CD8-positive, alpha-beta T cell (primary cell): ENCODE measurements at regions of chr3 and their contacts with region 1.

Region 1: GRCh38 chr3:159045268-159045910 is 243.5 kb downstream of the MFSD1 start:
- DNase-seq: no peak
- ATAC-seq: no peak
- H3K4me3 ChIP-seq: no peak overlapping the region
- H3K4me3 Mint-ChIP-seq: no peak overlapping the region
- H3K27ac ChIP-seq: no peak overlapping the region
- H3K27ac Mint-ChIP-seq: no peak overlapping the region
- H3K4me1 ChIP-seq: no peaks in the 10 kb centered on the region
- H3K4me1 Mint-ChIP-seq: no peaks in the 10 kb centered on the region
- H3K27me3 ChIP-seq: no peaks in the 10 kb centered on the region
- H3K27me3 Mint-ChIP-seq: no peaks in the 10 kb centered on the region
- CTCF ChIP-seq: no peak

Region 2: DNA sequence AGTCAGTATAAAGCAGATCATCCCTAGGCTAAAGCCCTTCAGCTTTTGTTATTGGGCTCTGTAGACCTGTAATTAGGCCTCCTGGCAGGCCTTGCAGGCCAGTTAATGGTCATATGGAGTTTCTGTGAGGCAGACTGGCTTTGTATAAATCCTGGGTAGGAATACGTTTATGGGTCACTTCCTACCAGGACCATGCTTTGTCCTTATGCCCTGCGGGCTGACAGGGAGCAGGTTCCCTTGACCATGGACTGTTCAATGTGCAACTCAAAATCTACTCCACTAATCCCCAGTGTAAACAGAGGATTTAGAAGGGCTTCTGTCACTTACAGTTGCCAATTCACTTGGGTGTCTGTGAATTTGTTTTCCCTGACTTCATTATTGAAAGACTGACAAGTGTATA is 677.1 kb before region 1 on chr3:
- CTCF ChIA-PET with region 1: no interaction called
- POLR2A ChIA-PET with region 1: no interaction called
- intact Hi-C with region 1: no loop called
- DNase-seq: no peak
- ATAC-seq: no peak
- H3K4me3 ChIP-seq: no peak overlapping the region
- H3K4me3 Mint-ChIP-seq: no peak overlapping the region
- H3K27ac ChIP-seq: no peak overlapping the region
- H3K27ac Mint-ChIP-seq: no peak overlapping the region
- H3K4me1 ChIP-seq: no peaks in the 10 kb centered on the region
- H3K4me1 Mint-ChIP-seq: no peaks in the 10 kb centered on the region
- H3K27me3 ChIP-seq: no peaks in the 10 kb centered on the region
- H3K27me3 Mint-ChIP-seq: no peaks in the 10 kb centered on the region
- CTCF ChIP-seq: no peak

Region 3: GRCh38 chr3:159062734-159063410 is 17.5 kb after region 1 on chr3:
- CTCF ChIA-PET with region 1: no interaction called
- POLR2A ChIA-PET with region 1: no interaction called
- intact Hi-C with region 1: loop called in 1 of 2 experiments (anchors 1 kb)
- DNase-seq: no peak
- ATAC-seq: no peak
- H3K4me3 ChIP-seq: no peak overlapping the region
- H3K4me3 Mint-ChIP-seq: no peak overlapping the region
- H3K27ac ChIP-seq: no peak overlapping the region
- H3K27ac Mint-ChIP-seq: no peak overlapping the region
- H3K4me1 ChIP-seq: no peaks in the 10 kb centered on the region
- H3K4me1 Mint-ChIP-seq: no peaks in the 10 kb centered on the region
- H3K27me3 ChIP-seq: no peaks in the 10 kb centered on the region
- H3K27me3 Mint-ChIP-seq: no peaks in the 10 kb centered on the region
- CTCF ChIP-seq: no peak

Region 4: GRCh38 chr3:161042023-161042501 is 1996.7 kb after region 1 on chr3:
- CTCF ChIA-PET with region 1: no interaction called
- POLR2A ChIA-PET with region 1: no interaction called
- intact Hi-C with region 1: no loop called
- DNase-seq: no peak
- ATAC-seq: no peak
- H3K4me3 ChIP-seq: no peak overlapping the region
- H3K4me3 Mint-ChIP-seq: no peak overlapping the region
- H3K27ac ChIP-seq: no peak overlapping the region
- H3K27ac Mint-ChIP-seq: no peak overlapping the region
- H3K4me1 ChIP-seq: no peaks in the 10 kb centered on the region
- H3K4me1 Mint-ChIP-seq: no peaks in the 10 kb centered on the region
- H3K27me3 ChIP-seq: no peaks in the 10 kb centered on the region
- H3K27me3 Mint-ChIP-seq: no peaks in the 10 kb centered on the region
- CTCF ChIP-seq: no peak